ENCODE measurements at regions of chr7 and their contacts with region 1.

Region 1: GRCh38 chr7:87797798-87798403 is 78.3 kb downstream of the SLC25A40 start:
- DNase-seq: no peak
- ATAC-seq: no peak
- H3K4me3 ChIP-seq: no peak overlapping the region
- H3K27ac ChIP-seq: no peak overlapping the region
- H3K4me1 ChIP-seq: no peaks in the 10 kb centered on the region
- H3K27me3 ChIP-seq: no peaks in the 10 kb centered on the region
- CTCF ChIP-seq: peak in 3 of 5 experiments; percentile 20 to 48 (median 40)
- POLR2A ChIP-seq: no peak

Region 2: GRCh38 chr7:88111136-88111743 is 313.3 kb after region 1 on chr7:
- in situ Hi-C with region 1: loop called in 1 of 4 experiments (anchors 10 kb)
- intact Hi-C with region 1: loop called (anchors 2 kb)
- DNase-seq: no peak
- ATAC-seq: peak; percentile 53 to 65
- H3K4me3 ChIP-seq: no peak overlapping the region
- H3K27ac ChIP-seq: no peak overlapping the region
- H3K4me1 ChIP-seq: peaks cover 8 to 11% of the 10 kb centered on the region in 2 donors
- H3K27me3 ChIP-seq: no peaks in the 10 kb centered on the region
- CTCF ChIP-seq: peak; percentile 12 to 57 (median 37)
- POLR2A ChIP-seq: no peak

Region 3: DNA sequence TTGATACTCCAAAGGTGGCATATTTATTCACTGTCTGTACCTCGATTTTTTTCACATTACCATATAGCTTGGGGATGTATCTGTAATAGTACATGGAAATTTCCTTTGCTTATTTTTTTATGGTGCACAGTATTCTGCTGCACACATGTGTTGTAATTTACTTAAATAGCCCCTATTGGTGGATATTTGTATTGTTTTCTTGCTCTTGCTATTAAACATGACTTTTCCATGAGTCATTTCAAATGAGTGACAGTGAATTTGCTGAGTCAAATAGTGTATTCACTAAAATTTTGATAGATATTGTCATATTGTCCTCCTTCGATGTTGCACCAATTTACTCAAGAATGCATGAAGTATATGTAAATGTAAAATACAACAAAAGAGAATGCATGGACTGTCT is 631.5 kb after region 1 on chr7:
- in situ Hi-C with region 1: no loop called
- intact Hi-C with region 1: no loop called
- DNase-seq: no peak
- ATAC-seq: no peak
- H3K4me3 ChIP-seq: no peak overlapping the region
- H3K27ac ChIP-seq: no peak overlapping the region
- H3K4me1 ChIP-seq: no peaks in the 10 kb centered on the region
- H3K27me3 ChIP-seq: no peaks in the 10 kb centered on the region
- CTCF ChIP-seq: no peak
- POLR2A ChIP-seq: no peak

Measured in gastrocnemius medialis (tissue), 4 donors.